ENCODE measurements at regions of chr6 and their contacts with region 1.

Region 1: DNA sequence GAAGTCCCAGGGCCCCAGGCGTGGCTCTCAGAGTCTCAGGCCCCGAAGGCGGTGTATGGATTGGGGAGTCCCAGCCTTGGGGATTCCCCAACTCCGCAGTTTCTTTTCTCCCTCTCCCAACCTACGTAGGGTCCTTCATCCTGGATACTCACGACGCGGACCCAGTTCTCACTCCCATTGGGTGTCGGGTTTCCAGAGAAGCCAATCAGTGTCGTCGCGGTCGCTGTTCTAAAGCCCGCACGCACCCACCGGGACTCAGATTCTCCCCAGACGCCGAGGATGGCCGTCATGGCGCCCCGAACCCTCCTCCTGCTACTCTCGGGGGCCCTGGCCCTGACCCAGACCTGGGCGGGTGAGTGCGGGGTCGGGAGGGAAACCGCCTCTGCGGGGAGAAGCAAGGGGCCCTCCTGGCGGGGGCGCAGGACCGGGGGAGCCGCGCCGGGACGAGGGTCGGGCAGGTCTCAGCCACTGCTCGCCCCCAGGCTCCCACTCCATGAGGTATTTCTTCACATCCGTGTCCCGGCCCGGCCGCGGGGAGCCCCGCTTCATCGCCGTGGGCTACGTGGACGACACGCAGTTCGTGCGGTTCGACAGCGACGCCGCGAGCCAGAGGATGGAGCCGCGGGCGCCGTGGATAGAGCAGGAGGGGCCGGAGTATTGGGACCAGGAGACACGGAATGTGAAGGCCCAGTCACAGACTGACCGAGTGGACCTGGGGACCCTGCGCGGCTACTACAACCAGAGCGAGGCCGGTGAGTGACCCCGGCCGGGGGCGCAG is at the start of gene HLA-A:
- DNase-seq: peak; percentile 96
- H3K4me3 Mint-ChIP-seq: peak within 1 kb of the TSS; percentile 87
- H3K27ac Mint-ChIP-seq: peak within 1 kb of the TSS; percentile 96
- H3K4me1 Mint-ChIP-seq: peaks cover 46% of the 10 kb centered on the region
- H3K27me3 Mint-ChIP-seq: peaks cover 3% of the 10 kb centered on the region
- total RNA-seq, gene HLA-A: 2,531 to 2,553 TPM

Region 2: GRCh38 chr6:29791786-29792122 is 150.7 kb before region 1 on chr6:
- CTCF ChIA-PET with region 1: interaction called, 3 read pairs
- POLR2A ChIA-PET with region 1: interaction called, 10 read pairs
- DNase-seq: no peak
- H3K4me3 Mint-ChIP-seq: peak overlapping the region; percentile 82
- H3K27ac Mint-ChIP-seq: no peak overlapping the region
- H3K4me1 Mint-ChIP-seq: peaks cover 19% of the 10 kb centered on the region
- H3K27me3 Mint-ChIP-seq: peaks cover 52% of the 10 kb centered on the region

Region 3: DNA sequence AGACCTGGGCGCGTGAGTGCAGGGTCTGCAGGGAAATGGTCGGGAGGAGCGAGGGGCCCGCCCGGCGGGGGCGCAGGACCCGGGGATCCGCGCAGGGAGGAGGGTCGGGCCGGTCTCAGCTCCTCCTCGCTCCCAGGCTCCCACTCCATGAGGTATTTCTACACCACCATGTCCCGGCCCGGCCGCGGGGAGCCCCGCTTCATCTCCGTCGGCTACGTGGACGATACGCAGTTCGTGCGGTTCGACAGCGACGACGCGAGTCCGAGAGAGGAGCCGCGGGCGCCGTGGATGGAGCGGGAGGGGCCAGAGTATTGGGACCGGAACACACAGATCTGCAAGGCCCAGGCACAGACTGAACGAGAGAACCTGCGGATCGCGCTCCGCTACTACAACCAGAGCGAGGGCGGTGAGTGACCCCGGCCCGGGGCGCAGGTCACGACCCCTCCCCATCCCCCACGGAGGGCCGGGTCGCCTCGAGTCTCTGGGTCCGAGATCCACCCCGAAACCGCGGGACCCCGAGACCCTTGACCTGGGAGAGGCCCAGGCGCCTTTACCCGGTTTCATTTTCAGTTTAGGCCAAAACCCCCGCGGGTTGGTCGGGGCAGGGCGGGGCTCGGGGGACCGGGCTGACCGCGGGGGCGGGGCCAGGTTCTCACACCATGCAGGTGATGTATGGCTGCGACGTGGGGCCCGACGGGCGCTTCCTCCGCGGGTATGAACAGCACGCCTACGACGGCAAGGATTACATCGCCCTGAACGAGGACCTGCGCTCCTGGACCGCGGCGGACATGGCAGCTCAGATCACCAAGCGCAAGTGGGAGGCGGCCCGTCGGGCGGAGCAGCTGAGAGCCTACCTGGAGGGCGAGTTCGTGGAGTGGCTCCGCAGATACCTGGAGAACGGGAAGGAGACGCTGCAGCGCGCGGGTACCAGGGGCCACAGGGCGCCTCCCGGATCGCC is 54.4 kb before region 1 on chr6:
- CTCF ChIA-PET with region 1: interaction called, 3 read pairs
- POLR2A ChIA-PET with region 1: interaction called, 29 read pairs
- DNase-seq: peak; percentile 93
- H3K4me3 Mint-ChIP-seq: peak overlapping the region; percentile 88
- H3K27ac Mint-ChIP-seq: peak overlapping the region; percentile 80
- H3K4me1 Mint-ChIP-seq: peaks cover 33% of the 10 kb centered on the region
- H3K27me3 Mint-ChIP-seq: peaks cover 2% of the 10 kb centered on the region

Region 4: DNA sequence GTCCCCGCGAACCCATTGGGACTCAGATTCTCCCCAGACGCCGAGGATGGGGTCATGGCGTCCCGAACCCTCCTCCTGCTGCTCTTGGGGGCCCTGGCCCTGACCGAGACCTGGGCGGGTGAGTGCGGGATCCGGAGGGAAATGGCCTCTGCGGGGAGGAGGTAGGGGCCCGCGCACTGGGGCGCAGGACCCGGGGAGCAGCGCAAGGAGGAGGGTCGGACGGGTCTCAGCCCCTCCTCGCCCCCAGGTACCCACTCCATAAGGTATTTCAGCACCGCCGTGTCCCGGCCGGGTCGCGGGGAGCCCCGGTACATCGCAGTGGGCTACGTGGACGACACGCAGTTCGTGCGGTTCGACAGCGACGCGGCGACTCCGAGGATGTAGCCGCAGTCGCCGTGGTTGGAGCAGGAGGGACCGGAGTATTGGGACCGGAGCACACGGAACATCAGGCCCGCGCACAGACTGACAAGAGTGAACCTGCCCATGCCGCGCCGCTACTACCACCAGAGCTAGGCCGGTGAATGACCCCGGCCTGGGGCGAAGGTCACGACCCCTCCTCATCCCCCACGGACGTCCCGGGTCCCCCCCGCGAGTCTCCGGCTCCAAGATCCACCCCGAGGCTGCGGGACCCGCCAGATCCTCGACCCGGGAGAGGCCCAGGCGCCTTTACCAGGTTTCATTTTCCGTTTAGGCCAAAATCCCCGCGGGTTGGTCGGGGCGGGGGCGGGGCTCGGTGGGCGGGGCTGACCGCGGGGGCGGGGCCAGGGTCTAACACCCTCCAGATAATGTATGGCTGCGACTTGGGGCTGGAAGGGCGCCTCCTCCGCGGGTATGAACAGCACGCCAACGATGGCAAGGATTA is 15.8 kb before region 1 on chr6:
- CTCF ChIA-PET with region 1: no interaction called
- POLR2A ChIA-PET with region 1: interaction called, 24 read pairs
- DNase-seq: peak; percentile 91
- H3K4me3 Mint-ChIP-seq: peak overlapping the region; percentile 84
- H3K27ac Mint-ChIP-seq: peak overlapping the region; percentile 85
- H3K4me1 Mint-ChIP-seq: peaks cover 36% of the 10 kb centered on the region
- H3K27me3 Mint-ChIP-seq: no peaks in the 10 kb centered on the region

Region 5: GRCh38 chr6:29964887-29965562 is 22.6 kb after region 1 on chr6:
- CTCF ChIA-PET with region 1: no interaction called
- POLR2A ChIA-PET with region 1: interaction called, 49 read pairs
- DNase-seq: peak; percentile 86
- H3K4me3 Mint-ChIP-seq: peak overlapping the region; percentile 93
- H3K27ac Mint-ChIP-seq: peak overlapping the region; percentile 97
- H3K4me1 Mint-ChIP-seq: peaks cover 41% of the 10 kb centered on the region
- H3K27me3 Mint-ChIP-seq: no peaks in the 10 kb centered on the region

Region 6: DNA sequence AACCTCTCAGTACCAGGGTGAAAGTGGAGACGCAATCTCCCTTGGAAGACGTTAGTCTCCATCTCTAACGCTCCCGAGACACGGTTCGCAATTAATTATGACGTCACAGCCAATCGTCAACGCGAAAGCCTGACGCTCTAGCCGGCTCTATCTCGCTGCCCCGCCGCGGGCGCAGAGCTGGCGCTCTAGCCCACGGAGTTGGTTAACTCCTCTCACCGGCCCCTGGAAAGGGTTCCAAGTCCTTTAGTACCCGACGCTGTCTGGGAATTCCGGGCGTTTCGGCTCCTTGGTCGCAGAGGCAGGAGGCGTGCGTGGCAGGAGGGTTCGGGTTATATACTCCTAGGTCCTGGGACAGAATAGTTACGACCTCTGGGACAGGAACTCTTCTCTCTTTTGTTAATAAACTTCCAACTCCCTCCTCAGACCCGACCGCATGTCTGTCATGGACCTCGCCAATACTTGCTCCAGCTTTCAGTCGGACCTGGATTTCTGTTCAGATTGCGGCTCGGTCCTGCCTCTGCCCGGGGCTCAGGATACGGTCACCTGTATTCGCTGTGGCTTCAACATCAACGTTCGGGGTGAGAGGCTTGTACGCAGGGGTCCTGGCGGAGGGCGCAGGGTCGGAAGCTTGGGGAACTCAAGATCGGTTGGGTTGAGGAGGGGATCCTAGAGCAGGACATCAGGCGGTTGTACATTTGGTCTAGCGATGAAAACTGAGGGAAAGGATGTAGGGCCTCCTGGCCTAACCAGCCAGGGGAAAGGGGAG is 118.8 kb after region 1 on chr6 and contains the start of gene POLR1H:
- CTCF ChIA-PET with region 1: no interaction called
- POLR2A ChIA-PET with region 1: interaction called, 10 read pairs
- DNase-seq: peak; percentile 90
- H3K4me3 Mint-ChIP-seq: peak within 1 kb of the TSS; percentile 98
- H3K27ac Mint-ChIP-seq: peak within 1 kb of the TSS; percentile 97
- H3K4me1 Mint-ChIP-seq: peaks cover 53% of the 10 kb centered on the region
- H3K27me3 Mint-ChIP-seq: no peaks in the 10 kb centered on the region
- total RNA-seq, gene POLR1H: 75.5 to 77.8 TPM